AG04450 (cell line): ENCODE measurements at regions of chr4 and their contacts with region 1.

Region 1: GRCh38 chr4:20773144-20773997 is 73.1 kb downstream of the PACRGL start:
- DNase-seq: peak; percentile 34
- H3K4me3 ChIP-seq: no peak overlapping the region
- H3K27ac ChIP-seq: no peak overlapping the region
- H3K27me3 ChIP-seq: no peaks in the 10 kb centered on the region
- CTCF ChIP-seq: peak; percentile 80

Region 2: GRCh38 chr4:20752641-20753040 is 20.7 kb before region 1 on chr4:
- CTCF ChIA-PET with region 1: interaction called, 10 read pairs
- POLR2A ChIA-PET with region 1: no interaction called
- DNase-seq: no peak
- H3K4me3 ChIP-seq: no peak overlapping the region
- H3K27ac ChIP-seq: no peak overlapping the region
- H3K27me3 ChIP-seq: no peaks in the 10 kb centered on the region
- CTCF ChIP-seq: no peak

Region 3: GRCh38 chr4:20760053-20760452 is 13.3 kb before region 1 on chr4:
- CTCF ChIA-PET with region 1: interaction called, 24 read pairs
- POLR2A ChIA-PET with region 1: interaction called, 3 read pairs
- DNase-seq: no peak
- H3K4me3 ChIP-seq: no peak overlapping the region
- H3K27ac ChIP-seq: no peak overlapping the region
- H3K27me3 ChIP-seq: no peaks in the 10 kb centered on the region
- CTCF ChIP-seq: no peak

Region 4: DNA sequence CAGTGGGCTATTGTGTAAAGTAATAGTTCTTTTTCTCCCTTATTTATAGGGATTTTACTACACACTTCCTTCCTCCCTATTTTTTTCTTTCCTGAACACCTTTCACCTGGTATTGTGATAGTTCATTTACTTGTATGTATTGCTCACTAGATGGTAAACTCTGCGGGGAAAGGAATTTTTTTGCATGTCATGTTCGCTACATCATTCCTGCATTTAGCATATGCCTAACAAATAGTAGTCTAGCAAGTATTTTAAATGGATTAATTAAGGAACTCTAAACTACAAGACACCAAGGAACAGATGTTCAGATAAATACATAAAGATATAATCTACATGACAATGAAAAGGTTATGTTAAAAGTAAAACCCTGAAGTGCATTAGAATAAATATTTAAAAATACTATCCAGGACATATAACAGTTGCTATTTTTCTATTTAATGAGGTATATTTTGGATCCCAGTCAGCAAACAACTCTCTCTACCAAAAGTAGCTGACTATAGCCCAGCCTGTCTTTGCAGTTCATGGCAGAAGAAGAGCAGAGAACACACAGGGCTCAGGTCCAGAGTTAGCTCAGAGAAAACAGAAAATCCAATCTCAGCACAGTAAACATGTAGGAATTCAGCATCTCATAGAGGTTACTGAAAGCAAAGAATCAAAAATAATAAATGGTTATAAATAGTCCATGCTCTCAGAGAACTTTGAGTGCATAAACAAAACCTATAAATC is 14.7 kb after region 1 on chr4:
- CTCF ChIA-PET with region 1: interaction called, 16 read pairs
- POLR2A ChIA-PET with region 1: no interaction called
- DNase-seq: no peak
- H3K4me3 ChIP-seq: no peak overlapping the region
- H3K27ac ChIP-seq: no peak overlapping the region
- H3K27me3 ChIP-seq: no peaks in the 10 kb centered on the region
- CTCF ChIP-seq: no peak

Region 5: GRCh38 chr4:21765810-21766407 is 992.5 kb after region 1 on chr4:
- CTCF ChIA-PET with region 1: interaction called, 93 read pairs
- POLR2A ChIA-PET with region 1: no interaction called
- DNase-seq: no peak
- H3K4me3 ChIP-seq: no peak overlapping the region
- H3K27ac ChIP-seq: no peak overlapping the region
- H3K27me3 ChIP-seq: no peaks in the 10 kb centered on the region
- CTCF ChIP-seq: peak; percentile 85